ENCODE measurements at regions of chr2 and their contacts with region 1.

Region 1: DNA sequence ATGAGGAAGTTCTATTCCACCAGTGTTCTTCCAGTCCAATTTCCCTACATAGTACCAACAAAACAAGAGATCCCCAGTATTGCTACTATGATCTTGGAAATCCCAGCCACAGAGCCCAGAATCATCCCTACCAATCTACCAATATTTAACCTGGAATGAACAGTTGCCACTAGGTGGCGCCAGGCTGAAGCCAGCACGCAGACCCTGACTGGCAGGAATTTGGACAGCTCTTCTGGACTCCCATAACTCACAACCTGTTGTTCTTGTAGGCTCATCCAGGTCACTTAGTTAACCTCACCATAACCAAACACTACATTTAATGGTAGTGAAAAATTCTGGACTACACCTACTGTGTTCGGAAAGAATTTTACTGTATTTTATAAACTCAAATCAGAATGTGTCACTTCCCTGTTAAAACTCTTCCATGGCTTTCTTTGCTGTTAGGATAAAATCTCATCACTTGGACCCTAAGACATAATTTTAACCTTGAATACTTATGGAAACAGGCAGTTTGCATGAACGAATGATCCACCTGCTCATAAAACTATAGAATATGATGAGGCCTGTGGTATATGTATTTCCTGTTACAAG is 59.8 kb upstream of the SLC38A11 start:
- DNase-seq: peak; percentile 44
- ATAC-seq: peak; percentile 89
- H3K4me3 ChIP-seq: no peak overlapping the region
- H3K27ac ChIP-seq: no peak overlapping the region
- H3K4me1 ChIP-seq: no peaks in the 10 kb centered on the region
- H3K27me3 ChIP-seq: peaks cover 14% of the 10 kb centered on the region; the same call in 1 of the 2 replicates
- CTCF ChIP-seq: peak; percentile 53 to 94 (median 81); a peak in 5 of 6 replicates
- POLR2A ChIP-seq: no peak
- RAD21 ChIP-seq: peak; percentile 58

Region 2: GRCh38 chr2:164737612-164738081 is 277.5 kb before region 1 on chr2:
- CTCF ChIA-PET with region 1: interaction called, 3 read pairs
- POLR2A ChIA-PET with region 1: no interaction called
- RAD21 ChIA-PET with region 1: no interaction called
- intact Hi-C with region 1: loop called (anchors 10 kb)
- DNase-seq: peak; percentile 73
- ATAC-seq: peak; percentile 94
- H3K4me3 ChIP-seq: no peak overlapping the region
- H3K27ac ChIP-seq: no peak overlapping the region
- H3K4me1 ChIP-seq: peaks cover 0 to 20% of the 10 kb centered on the region in 2 experiments; a peak in 3 of 4 replicates
- H3K27me3 ChIP-seq: no peaks in the 10 kb centered on the region
- CTCF ChIP-seq: peak; percentile 57 to 90 (median 81)
- POLR2A ChIP-seq: no peak
- RAD21 ChIP-seq: peak; percentile 92

Region 3: DNA sequence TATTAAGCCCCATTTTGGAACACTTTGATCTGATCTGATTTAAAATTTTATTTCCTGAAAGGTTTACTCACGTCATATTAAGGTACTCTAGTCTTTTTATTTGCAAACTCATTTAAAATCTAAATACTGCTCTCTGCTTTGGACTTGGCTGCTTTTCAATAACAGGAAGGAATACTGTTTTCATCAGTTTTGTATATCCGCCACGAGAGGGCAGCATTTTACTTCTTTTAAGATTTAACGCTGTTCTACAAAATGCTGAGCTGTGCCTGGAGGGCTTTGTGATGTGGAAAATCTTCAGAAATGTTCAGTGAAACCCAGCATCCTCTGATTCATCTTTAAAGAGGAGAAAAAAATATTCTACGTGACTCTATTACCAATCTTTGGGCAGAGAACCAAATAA is 22.3 kb before region 1 on chr2:
- CTCF ChIA-PET with region 1: interaction called, 10 read pairs
- POLR2A ChIA-PET with region 1: no interaction called
- RAD21 ChIA-PET with region 1: no interaction called
- intact Hi-C with region 1: no loop called
- DNase-seq: peak; percentile 58
- ATAC-seq: peak; percentile 76
- H3K4me3 ChIP-seq: no peak overlapping the region
- H3K27ac ChIP-seq: no peak overlapping the region
- H3K4me1 ChIP-seq: no peaks in the 10 kb centered on the region
- H3K27me3 ChIP-seq: no peaks in the 10 kb centered on the region
- CTCF ChIP-seq: peak; percentile 24 to 56 (median 47); a peak in 4 of 6 replicates
- POLR2A ChIP-seq: no peak
- RAD21 ChIP-seq: peak; percentile 69

Region 4: GRCh38 chr2:165203689-165204559 is 188.8 kb after region 1 on chr2 and contains the start of gene SCN3A:
- CTCF ChIA-PET with region 1: interaction called, 44 read pairs
- POLR2A ChIA-PET with region 1: no interaction called
- RAD21 ChIA-PET with region 1: no interaction called
- intact Hi-C with region 1: loop called (anchors 2 kb)
- DNase-seq: peak; percentile 24
- ATAC-seq: peak; percentile 63; the same call in 1 of the 2 replicates
- H3K4me3 ChIP-seq: no peak within 1 kb of the TSS
- H3K27ac ChIP-seq: no peak within 1 kb of the TSS
- H3K4me1 ChIP-seq: no peaks in the 10 kb centered on the region
- H3K27me3 ChIP-seq: peaks cover 36% of the 10 kb centered on the region
- CTCF ChIP-seq: peak; percentile 66 to 78 (median 67); a peak in 5 of 6 replicates
- POLR2A ChIP-seq: no peak
- RAD21 ChIP-seq: peak; percentile 65
- total RNA-seq, gene SCN3A: not detected

Region 5: GRCh38 chr2:165293440-165294353 is 278.6 kb after region 1 on chr2:
- CTCF ChIA-PET with region 1: interaction called, 10 read pairs
- POLR2A ChIA-PET with region 1: no interaction called
- RAD21 ChIA-PET with region 1: no interaction called
- intact Hi-C with region 1: no loop called
- DNase-seq: peak; percentile 79
- ATAC-seq: peak; percentile 100
- H3K4me3 ChIP-seq: no peak overlapping the region
- H3K27ac ChIP-seq: no peak overlapping the region
- H3K4me1 ChIP-seq: no peaks in the 10 kb centered on the region
- H3K27me3 ChIP-seq: no peaks in the 10 kb centered on the region
- CTCF ChIP-seq: peak; percentile 58 to 77 (median 71)
- POLR2A ChIP-seq: no peak
- RAD21 ChIP-seq: peak; percentile 53

Region 6: DNA sequence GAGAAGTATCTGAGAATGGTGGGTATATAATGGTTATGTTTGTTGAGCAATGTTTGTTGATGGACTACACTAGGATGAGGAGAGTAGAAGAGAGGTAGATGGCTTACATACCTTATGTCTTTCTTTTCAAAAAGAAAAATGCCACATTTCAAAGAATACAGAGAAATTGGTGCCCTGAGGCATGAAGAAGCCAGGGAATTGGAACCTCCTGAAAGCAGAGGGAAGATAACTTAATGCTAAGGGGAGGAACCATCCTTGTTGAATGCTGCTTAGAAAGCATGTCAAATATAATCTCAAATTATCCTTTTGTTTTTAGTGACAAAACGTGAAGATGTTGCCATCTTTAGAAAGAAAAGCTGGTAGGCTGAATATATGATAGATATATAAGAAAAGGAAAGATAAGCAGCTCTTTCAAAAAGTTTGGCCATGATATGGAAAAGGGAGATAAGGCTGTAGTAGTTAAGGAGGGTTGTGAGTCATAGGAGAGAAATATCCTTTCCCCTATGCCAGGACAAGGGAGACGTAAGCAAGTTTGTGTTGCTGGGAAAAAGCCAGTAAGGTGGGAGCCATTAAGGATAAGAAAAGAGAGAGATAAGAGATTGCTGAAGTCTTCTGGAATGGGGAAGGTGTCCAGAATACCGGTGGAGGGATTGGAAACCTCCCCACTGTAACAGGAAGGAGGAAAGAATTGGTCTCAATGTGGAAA is 290.4 kb after region 1 on chr2:
- CTCF ChIA-PET with region 1: interaction called, 5 read pairs
- POLR2A ChIA-PET with region 1: no interaction called
- RAD21 ChIA-PET with region 1: no interaction called
- intact Hi-C with region 1: loop called (anchors 10 kb)
- DNase-seq: no peak
- ATAC-seq: no peak
- H3K4me3 ChIP-seq: no peak overlapping the region
- H3K27ac ChIP-seq: no peak overlapping the region
- H3K4me1 ChIP-seq: no peaks in the 10 kb centered on the region
- H3K27me3 ChIP-seq: peaks cover 10% of the 10 kb centered on the region
- CTCF ChIP-seq: no peak
- POLR2A ChIP-seq: no peak
- RAD21 ChIP-seq: no peak

Region 7: DNA sequence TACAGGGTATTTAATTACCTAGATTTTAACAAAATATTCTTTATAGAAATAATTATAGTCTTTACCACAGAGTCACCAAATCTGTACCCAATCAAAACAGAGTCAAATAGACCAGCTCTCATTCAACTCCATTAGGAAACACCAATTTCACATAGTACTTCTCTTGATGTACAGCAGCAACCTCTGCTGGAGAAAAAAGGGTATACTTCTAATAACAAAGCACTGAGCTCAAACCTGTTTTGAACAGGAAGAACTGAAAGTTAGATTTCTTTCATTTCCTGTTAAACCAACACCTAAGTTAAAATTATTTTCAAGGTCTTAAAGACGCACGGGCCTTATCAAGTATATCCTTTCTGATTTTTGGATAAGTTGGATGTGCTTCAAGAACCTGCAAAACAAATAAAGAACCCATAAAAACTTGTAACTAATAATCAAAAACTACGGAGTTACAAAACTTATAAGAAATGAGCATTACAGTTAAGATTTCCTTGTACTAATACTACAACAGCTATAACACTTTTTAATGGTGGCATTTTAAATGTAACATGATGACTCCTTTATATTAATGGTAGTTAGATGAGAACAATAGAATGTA is 859.4 kb after region 1 on chr2:
- CTCF ChIA-PET with region 1: interaction called, 8 read pairs
- POLR2A ChIA-PET with region 1: no interaction called
- RAD21 ChIA-PET with region 1: no interaction called
- intact Hi-C with region 1: loop called (anchors 10 kb)
- DNase-seq: peak; percentile 28
- ATAC-seq: peak; percentile 84
- H3K4me3 ChIP-seq: no peak overlapping the region
- H3K27ac ChIP-seq: no peak overlapping the region
- H3K4me1 ChIP-seq: no peaks in the 10 kb centered on the region
- H3K27me3 ChIP-seq: no peaks in the 10 kb centered on the region
- CTCF ChIP-seq: peak; percentile 58 to 63 (median 59); a peak in 5 of 6 replicates
- POLR2A ChIP-seq: no peak
- RAD21 ChIP-seq: peak; percentile 78